ENCODE measurements at regions of chr6 and their contacts with region 1.

Region 1: DNA sequence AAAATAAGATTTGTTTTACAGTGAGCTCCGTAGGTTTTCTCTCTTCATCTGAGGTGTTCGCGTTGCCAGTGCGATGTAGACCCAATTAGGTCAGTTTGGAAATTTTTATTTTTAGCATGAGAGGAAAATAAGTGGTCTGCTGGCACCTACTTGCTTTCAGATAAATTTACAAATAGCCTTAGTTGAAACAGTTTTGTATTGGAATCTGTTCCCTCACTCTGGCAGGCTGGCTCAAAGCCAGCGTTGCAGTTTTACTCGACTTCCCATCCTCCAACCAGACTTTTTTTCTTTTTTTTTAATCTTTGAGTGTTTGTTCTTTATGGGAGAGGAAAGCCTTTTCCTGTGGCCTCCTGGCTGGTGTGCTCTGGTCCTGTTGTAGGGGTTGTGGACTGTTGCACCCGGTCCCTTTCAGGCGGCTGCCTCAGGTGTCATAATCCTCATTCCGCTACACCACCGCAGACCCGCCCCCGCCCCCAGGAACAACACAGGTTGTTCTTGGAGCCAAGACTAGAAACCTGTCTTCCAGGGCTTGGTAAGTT is 46.7 kb downstream of the TIAM2 start:
- DNase-seq: no peak
- H3K4me3 ChIP-seq: no peak overlapping the region
- H3K27ac ChIP-seq: no peak overlapping the region
- H3K4me1 ChIP-seq: peaks cover 6% of the 10 kb centered on the region
- H3K27me3 ChIP-seq: no peaks in the 10 kb centered on the region
- CTCF ChIP-seq: no peak

Region 2: GRCh38 chr6:154705471-154706113 is 336.2 kb before region 1 on chr6:
- CTCF ChIA-PET with region 1: no interaction called
- POLR2A ChIA-PET with region 1: interaction called, 17 read pairs
- intact Hi-C with region 1: no loop called
- DNase-seq: peak; percentile 46
- H3K4me3 ChIP-seq: no peak overlapping the region
- H3K27ac ChIP-seq: no peak overlapping the region
- H3K4me1 ChIP-seq: no peaks in the 10 kb centered on the region
- H3K27me3 ChIP-seq: no peaks in the 10 kb centered on the region
- CTCF ChIP-seq: peak; percentile 44